HCT116 (cell line): ENCODE measurements at regions of chr14 and their contacts with region 1.

Region 1: DNA sequence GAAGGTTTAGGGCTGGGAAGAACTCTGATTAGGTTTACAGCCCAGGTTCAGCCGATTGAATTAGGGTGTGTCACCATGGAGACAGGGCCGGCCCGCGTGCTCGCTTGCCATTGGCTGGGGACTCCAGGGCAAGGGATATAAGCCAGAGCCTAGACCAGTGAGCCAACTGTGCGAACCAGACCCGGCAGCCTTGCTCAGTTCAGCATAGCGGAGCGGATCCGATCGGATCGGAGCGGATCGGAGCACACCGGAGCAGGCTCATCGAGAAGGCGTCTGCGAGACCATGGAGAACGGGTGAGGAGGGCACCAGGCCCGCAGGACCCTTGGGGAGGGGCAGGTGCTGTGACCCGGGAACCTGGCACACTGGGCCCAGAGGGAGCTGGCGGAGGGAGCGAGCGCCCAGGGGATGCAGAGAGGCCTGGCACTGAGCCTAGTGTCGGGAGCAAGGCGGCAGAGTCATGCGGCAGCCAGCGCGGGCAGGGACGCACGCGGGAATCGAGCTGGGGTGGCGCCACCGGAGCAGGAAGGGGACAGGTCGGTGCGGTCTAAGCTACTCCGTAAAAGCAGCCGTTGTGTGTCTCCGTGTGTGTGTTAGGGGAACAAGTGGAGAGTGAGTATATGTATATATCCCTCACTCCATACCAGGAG is at the start of gene PNP:
- DNase-seq: peak; percentile 85
- ATAC-seq: peak; percentile 95
- H3K4me3 ChIP-seq: peak within 1 kb of the TSS; percentile 80 to 96
- H3K27ac ChIP-seq: peak within 1 kb of the TSS; percentile 86
- H3K4me1 ChIP-seq: peaks cover 10 to 15% of the 10 kb centered on the region in 2 experiments; a peak in 3 of 4 replicates
- H3K27me3 ChIP-seq: no peaks in the 10 kb centered on the region
- CTCF ChIP-seq: no peak
- POLR2A ChIP-seq: peak; percentile 99
- RAD21 ChIP-seq: 0 out of 2 replicates have a peak, but pooled peaks have one; percentile 8
- total RNA-seq, gene PNP: 63.0 TPM

Region 2: GRCh38 chr14:20327005-20327869 is 142.1 kb before region 1 on chr14:
- CTCF ChIA-PET with region 1: no interaction called
- POLR2A ChIA-PET with region 1: interaction called, 4 read pairs
- RAD21 ChIA-PET with region 1: no interaction called
- intact Hi-C with region 1: loop called (anchors 5 kb)
- DNase-seq: peak; percentile 58
- ATAC-seq: peak; percentile 61
- H3K4me3 ChIP-seq: no peak overlapping the region
- H3K27ac ChIP-seq: peak overlapping the region; percentile 31; the same call in 1 of the 2 replicates
- H3K4me1 ChIP-seq: peaks cover 6 to 15% of the 10 kb centered on the region in 2 experiments; a peak in 3 of 4 replicates
- H3K27me3 ChIP-seq: no peaks in the 10 kb centered on the region
- CTCF ChIP-seq: peak; percentile 51 to 79 (median 63); a peak in 5 of 6 replicates
- POLR2A ChIP-seq: no peak
- RAD21 ChIP-seq: peak; percentile 73

Region 3: DNA sequence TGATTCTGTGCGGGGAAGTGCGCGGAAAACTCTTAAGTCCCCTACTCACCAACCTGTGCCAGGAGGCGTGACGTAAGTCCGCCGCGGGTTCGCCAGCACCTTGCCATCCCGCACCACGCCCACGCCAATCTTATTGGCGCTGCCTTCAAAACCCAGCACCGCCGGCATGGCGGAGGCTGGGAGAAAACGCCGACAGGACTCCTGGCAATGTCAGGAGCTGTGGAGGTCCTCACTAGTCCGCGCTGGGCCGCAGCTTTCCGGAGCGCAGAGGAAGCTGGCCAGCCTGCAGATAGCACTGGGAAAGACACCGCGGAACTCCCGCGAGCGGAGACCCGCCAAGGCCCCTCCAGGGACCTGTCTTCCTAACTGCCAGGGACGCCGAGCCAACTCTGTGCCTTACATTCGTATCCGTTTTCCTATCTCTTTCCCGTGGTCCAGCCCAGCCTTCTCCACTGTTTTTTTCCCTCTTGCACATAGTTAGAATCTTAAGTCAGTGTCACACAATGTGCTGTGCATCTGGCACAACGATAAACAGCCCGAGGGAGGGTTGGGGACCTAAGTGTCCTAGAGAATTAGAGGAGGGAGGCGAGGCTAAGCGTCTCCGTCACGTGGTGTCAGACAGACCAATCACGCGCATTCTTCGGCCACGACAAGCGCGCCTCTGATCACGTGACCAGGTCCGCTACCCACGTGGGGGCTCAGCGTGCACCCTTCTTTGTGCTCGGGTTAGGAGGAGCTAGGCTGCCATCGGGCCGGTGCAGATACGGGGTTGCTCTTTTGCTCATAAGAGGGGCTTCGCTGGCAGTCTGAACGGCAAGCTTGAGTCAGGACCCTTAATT is 14.6 kb before region 1 on chr14 and contains the starts of genes APEX1 and OSGEP:
- CTCF ChIA-PET with region 1: no interaction called
- POLR2A ChIA-PET with region 1: interaction called, 18 read pairs
- RAD21 ChIA-PET with region 1: no interaction called
- intact Hi-C with region 1: no loop called
- DNase-seq: peak; percentile 99
- ATAC-seq: peak; percentile 82
- H3K4me3 ChIP-seq: peak within 1 kb of the TSS; percentile 83 to 96
- H3K27ac ChIP-seq: peak within 1 kb of the TSS; percentile 97
- H3K4me1 ChIP-seq: peaks cover 12 to 16% of the 10 kb centered on the region in 2 experiments; a peak in 3 of 4 replicates
- H3K27me3 ChIP-seq: no peaks in the 10 kb centered on the region
- CTCF ChIP-seq: no peak
- POLR2A ChIP-seq: peak; percentile 59
- RAD21 ChIP-seq: no peak
- total RNA-seq, gene APEX1: 235 TPM
- total RNA-seq, gene OSGEP: 21.8 TPM

Region 4: GRCh38 chr14:20482382-20482781 is 13.0 kb after region 1 on chr14:
- CTCF ChIA-PET with region 1: interaction called, 4 read pairs
- POLR2A ChIA-PET with region 1: interaction called, 14 read pairs
- RAD21 ChIA-PET with region 1: no interaction called
- intact Hi-C with region 1: no loop called
- DNase-seq: no peak
- ATAC-seq: no peak
- H3K4me3 ChIP-seq: no peak overlapping the region
- H3K27ac ChIP-seq: no peak overlapping the region
- H3K4me1 ChIP-seq: no peaks in the 10 kb centered on the region
- H3K27me3 ChIP-seq: no peaks in the 10 kb centered on the region
- CTCF ChIP-seq: no peak
- POLR2A ChIP-seq: no peak
- RAD21 ChIP-seq: no peak

Region 5: DNA sequence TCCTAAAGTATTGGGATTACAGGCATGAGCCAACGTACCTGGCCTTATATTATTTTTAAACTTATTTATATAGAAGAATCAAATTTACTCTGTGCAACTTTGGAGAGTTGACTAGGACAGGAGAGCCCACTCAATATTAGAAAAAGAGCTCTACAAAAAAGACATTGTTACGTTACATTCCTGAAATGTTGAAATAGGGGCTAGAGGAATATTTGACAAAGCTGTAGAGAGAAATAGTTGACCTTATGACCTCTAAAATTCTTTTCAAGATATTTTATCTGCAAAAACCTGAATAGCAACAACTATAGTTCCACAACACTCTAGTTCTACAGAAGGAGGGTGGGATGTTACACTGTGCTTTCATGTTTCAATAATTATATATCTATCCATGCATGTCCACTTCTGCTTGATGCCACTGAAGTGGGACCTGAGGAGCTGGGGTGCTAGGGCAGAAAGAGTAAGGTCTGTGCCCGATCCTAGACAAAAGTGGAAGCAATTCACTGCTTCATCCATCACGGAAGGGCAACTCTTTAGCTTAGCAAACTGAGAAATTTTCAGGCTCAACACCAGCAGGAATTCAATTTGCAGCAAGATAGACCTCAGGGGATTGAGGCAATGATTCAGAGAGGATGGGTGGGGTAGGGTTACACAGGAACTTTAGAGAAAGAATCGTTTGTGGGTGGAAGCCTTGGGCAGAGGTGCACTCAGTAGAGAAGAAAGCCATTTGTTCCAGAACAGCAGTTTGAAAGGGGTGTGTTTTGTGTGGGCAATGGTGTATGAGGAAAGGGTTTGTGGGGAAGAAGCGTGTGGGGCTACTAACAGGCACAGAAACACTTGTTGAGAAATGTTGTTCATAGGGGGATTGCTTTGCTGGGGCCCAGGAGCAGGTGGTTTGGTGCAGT is 20.0 kb after region 1 on chr14:
- CTCF ChIA-PET with region 1: interaction called, 4 read pairs
- POLR2A ChIA-PET with region 1: interaction called, 10 read pairs
- RAD21 ChIA-PET with region 1: no interaction called
- intact Hi-C with region 1: no loop called
- DNase-seq: no peak
- ATAC-seq: no peak
- H3K4me3 ChIP-seq: no peak overlapping the region
- H3K27ac ChIP-seq: no peak overlapping the region
- H3K4me1 ChIP-seq: peaks cover 7 to 30% of the 10 kb centered on the region in 2 experiments; a peak in 3 of 4 replicates
- H3K27me3 ChIP-seq: no peaks in the 10 kb centered on the region
- CTCF ChIP-seq: no peak
- POLR2A ChIP-seq: no peak
- RAD21 ChIP-seq: no peak

Region 6: DNA sequence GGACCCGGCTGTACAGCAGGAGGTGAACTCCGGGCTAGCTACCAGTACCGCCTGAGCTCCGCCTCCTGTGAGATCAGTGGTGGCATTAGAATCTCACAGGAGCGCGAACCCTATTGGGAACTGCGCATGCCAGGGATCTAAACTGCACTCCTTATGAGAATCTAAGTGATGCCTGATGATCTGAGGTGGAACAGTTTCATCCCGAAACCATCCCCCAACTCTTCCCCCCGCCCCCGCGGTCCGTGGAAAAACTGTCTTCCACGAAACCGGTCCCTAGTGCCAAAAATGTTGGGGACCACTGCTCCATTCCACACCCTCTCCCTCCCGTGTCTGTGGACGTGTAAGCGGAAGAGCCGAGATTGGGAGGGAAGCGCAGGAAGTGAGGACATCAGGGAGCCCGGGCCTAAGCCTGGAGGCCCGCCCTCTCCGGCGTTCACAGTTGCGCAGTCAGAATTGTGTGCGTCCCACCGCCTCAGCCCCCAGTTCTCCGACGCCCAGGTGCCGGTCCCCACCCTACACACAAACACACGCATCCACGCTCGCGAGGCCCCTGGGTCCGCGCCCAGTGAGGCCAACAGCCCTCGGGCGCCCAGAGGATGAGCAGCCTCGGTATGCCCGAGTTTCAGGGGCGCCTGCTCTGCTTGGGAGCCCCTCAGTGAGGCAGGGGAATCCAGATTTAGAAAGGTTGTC is 213.2 kb after region 1 on chr14:
- CTCF ChIA-PET with region 1: no interaction called
- POLR2A ChIA-PET with region 1: interaction called, 3 read pairs
- RAD21 ChIA-PET with region 1: no interaction called
- intact Hi-C with region 1: loop called (anchors 5 kb)
- DNase-seq: peak; percentile 88
- ATAC-seq: peak; percentile 61
- H3K4me3 ChIP-seq: peak overlapping the region; percentile 65 to 72
- H3K27ac ChIP-seq: peak overlapping the region; percentile 97
- H3K4me1 ChIP-seq: peaks cover 27 to 64% of the 10 kb centered on the region in 2 experiments
- H3K27me3 ChIP-seq: no peaks in the 10 kb centered on the region
- CTCF ChIP-seq: 0 out of 6 replicates have a peak, but pooled peaks of 1 of the 3 experiments have one; percentile 7
- POLR2A ChIP-seq: peak; percentile 13
- RAD21 ChIP-seq: no peak